ENCODE measurements at regions of chr19 and their contacts with region 1.

Region 1: DNA sequence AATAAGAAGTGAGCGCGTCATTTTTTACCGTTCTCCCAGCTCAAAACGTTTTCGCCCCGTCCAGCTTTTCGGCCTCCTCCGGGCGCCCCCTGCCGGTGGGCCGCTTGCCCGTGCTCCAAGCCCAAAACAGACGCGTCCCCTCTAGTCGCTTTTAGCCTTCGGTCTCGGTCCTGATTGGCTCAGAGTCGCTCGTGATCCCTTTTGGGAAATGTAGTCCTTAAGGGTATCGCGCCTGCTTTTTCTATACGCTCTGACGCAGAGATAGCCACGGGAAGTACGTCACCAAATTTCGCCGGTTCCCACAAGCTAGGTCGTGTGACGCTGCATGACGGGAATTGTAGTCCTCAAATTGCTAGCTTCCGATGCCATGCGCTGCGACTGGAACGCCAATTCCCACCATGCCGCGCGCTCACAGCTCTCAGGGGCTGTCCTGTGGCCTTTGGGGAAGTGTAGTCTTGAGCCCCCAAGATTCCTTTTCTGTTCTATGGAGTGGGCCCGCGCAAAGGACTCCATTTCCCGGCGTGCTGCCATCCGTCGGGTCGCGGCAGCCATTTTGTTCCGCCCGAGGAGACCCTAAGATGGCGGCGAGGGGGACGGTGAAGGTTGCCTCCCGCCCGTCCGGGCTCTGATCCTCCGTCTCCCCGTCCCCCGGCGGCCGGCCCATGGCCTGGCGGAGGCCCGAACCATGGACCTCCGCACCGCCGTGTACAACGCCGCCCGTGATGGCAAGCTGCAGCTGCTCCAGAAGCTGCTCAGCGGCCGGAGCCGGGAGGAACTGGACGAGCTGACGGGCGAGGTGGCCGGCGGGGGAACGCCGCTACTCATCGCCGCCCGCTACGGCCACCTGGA is at the start of gene FEM1A:
- DNase-seq: peak; percentile 100
- ATAC-seq: peak; percentile 92
- H3K4me3 ChIP-seq: peak within 1 kb of the TSS; percentile 95
- H3K27ac ChIP-seq: peak within 1 kb of the TSS; percentile 81
- H3K4me1 ChIP-seq: peaks cover 29% of the 10 kb centered on the region
- H3K27me3 ChIP-seq: no peaks in the 10 kb centered on the region
- CTCF ChIP-seq: peak; percentile 99
- total RNA-seq, gene FEM1A: 28.1 and 30.6 TPM in 2 replicates

Region 2: GRCh38 chr19:4633140-4633967 is 158.0 kb before region 1 on chr19:
- CTCF ChIA-PET with region 1: interaction called, 10 read pairs
- POLR2A ChIA-PET with region 1: no interaction called
- intact Hi-C with region 1: no loop called
- DNase-seq: peak; percentile 81
- ATAC-seq: peak; percentile 55
- H3K4me3 ChIP-seq: no peak overlapping the region
- H3K27ac ChIP-seq: no peak overlapping the region
- H3K4me1 ChIP-seq: peaks cover 16% of the 10 kb centered on the region
- H3K27me3 ChIP-seq: no peaks in the 10 kb centered on the region
- CTCF ChIP-seq: peak; percentile 94

Region 3: DNA sequence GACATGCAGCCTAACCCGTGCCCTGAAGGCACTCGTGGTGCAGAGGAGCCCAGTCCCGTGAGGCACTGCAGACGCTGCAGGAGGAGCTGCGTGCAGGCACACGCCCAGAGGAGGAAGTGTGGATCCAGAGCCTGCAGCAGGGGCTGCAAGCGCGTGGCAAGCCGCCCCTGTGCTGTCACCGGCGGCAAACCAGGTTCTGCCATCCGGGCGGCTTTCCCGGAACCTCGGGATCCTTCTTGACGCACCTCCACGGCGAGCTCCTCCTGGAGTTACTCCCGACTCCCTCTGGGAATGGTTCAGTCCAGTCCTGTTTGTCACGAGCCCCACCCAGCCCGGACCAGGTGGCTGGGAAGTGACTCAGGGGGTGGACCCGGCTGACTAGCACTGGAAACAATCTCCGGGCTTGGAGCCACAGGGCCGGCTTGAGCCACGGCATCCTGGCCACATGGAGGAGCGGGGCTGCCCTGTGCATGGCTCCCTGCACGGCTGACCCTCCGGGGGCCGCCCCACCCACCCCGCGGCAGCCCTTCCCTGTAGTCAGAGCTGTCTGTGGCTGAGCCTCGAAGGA is 77.9 kb before region 1 on chr19:
- CTCF ChIA-PET with region 1: interaction called, 11 read pairs
- POLR2A ChIA-PET with region 1: no interaction called
- intact Hi-C with region 1: no loop called
- DNase-seq: peak; percentile 100
- ATAC-seq: peak; percentile 88
- H3K4me3 ChIP-seq: peak overlapping the region; percentile 33; the same call in 1 of the 2 replicates
- H3K27ac ChIP-seq: peak overlapping the region; percentile 85
- H3K4me1 ChIP-seq: peaks cover 53% of the 10 kb centered on the region
- H3K27me3 ChIP-seq: no peaks in the 10 kb centered on the region
- CTCF ChIP-seq: no peak

Region 4: GRCh38 chr19:4732680-4733114 is 58.7 kb before region 1 on chr19:
- CTCF ChIA-PET with region 1: interaction called, 34 read pairs
- POLR2A ChIA-PET with region 1: no interaction called
- intact Hi-C with region 1: loop called (anchors 1 kb)
- DNase-seq: peak; percentile 87
- ATAC-seq: peak; percentile 93
- H3K4me3 ChIP-seq: peak overlapping the region; percentile 36; the same call in 1 of the 2 replicates
- H3K27ac ChIP-seq: no peak overlapping the region
- H3K4me1 ChIP-seq: no peaks in the 10 kb centered on the region
- H3K27me3 ChIP-seq: no peaks in the 10 kb centered on the region
- CTCF ChIP-seq: peak; percentile 87

Region 5: DNA sequence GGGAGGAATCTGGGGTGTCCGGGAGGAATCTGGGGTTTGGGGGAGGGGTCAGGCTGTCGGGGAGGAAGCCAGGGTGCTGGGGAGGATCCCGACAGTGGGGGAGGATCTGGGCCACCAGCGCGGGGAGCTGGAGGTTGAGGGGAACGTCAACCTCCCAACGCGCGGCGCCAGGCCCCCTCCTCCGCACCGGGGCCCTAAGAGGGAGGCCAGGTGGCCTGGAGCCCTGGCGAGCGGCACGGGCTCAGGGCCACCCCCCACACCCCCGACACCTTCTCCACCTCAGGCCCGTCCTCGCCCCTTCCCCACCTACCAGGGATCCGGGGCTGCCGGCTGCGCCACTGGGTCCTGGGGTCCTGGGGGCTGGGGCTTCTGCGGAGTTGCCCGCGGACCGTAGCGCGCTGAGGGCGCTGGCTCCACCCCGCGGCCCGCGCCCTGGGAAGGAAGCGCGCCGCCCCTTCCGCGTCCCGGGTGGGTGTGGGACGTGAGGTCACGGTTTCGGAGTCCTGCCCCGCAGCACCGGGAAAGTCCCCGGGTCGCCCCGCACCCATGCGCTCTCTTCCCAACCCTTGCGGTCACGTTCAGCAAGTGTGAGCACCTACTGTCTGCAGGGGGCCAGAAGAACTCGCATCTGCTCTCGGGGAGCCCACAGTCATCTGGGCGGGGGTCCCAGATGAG is 40.0 kb after region 1 on chr19 and contains the start of gene TICAM1:
- CTCF ChIA-PET with region 1: no interaction called
- POLR2A ChIA-PET with region 1: interaction called, 12 read pairs
- intact Hi-C with region 1: no loop called
- DNase-seq: peak; percentile 63
- ATAC-seq: peak; percentile 90
- H3K4me3 ChIP-seq: peak within 1 kb of the TSS; percentile 92
- H3K27ac ChIP-seq: peak within 1 kb of the TSS; percentile 56
- H3K4me1 ChIP-seq: peaks cover 13% of the 10 kb centered on the region; the same call in 1 of the 2 replicates
- H3K27me3 ChIP-seq: no peaks in the 10 kb centered on the region
- CTCF ChIP-seq: no peak
- total RNA-seq, gene TICAM1: 6.5 and 17.0 TPM in 2 replicates

Measured in PC-3 (cell line).